Natural killer cell (primary cell): ENCODE measurements at regions of chr2 and their contacts with region 1.

Region 1: DNA sequence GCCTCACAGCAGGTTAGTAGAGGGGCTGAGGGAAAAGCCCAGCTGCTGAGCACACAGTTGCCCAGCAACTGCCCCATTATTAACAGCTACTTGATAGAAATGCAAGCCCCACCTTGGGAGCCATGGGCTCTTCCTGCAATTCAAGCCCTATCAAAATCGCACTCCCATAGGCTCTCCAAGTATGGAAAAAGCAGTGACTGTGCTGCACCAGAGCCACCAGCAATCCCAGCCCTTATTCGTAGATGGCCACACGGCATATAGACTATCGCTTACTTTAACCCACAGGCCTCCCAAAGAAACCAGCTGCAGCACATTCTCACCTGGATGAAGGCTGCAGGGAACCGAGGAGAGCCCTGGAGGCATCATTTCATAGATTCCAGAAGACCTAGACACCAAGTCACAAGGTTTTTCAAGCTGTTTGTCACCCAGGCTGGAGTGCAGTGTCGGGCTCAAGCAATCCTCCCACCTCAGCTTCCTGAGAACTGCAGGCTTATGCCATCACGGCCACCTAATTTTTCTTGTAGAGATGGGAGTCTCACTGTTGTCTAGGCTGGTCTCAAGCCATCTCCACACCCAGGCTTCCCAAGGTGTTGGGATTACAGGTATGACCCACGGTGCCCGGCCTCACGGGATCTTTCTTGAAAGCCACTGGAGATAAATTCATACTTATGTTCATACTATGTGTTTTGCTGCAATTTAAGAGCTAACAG is 11.3 kb downstream of the NCL start:
- DNase-seq: no peak
- ATAC-seq: no peak
- H3K4me3 ChIP-seq: no peak overlapping the region
- H3K4me3 Mint-ChIP-seq: peak overlapping the region; percentile 37
- H3K27ac ChIP-seq: no peak overlapping the region
- H3K27ac Mint-ChIP-seq: peak overlapping the region; percentile 78 to 81
- H3K4me1 ChIP-seq: peaks cover 6% of the 10 kb centered on the region
- H3K4me1 Mint-ChIP-seq: peaks cover 24 to 25% of the 10 kb centered on the region in 2 donors
- H3K27me3 ChIP-seq: no peaks in the 10 kb centered on the region
- H3K27me3 Mint-ChIP-seq: no peaks in the 10 kb centered on the region
- CTCF ChIP-seq: no peak

Region 2: GRCh38 chr2:231104115-231104713 is 348.7 kb before region 1 on chr2:
- intact Hi-C with region 1: loop called (anchors 1 kb)
- DNase-seq: peak; percentile 54 to 74
- ATAC-seq: peak; percentile 83 to 95 (median 94)
- H3K4me3 ChIP-seq: no peak overlapping the region
- H3K4me3 Mint-ChIP-seq: no peak overlapping the region
- H3K27ac ChIP-seq: no peak overlapping the region
- H3K27ac Mint-ChIP-seq: peak overlapping the region in 1 of 2 donors; percentile 59
- H3K4me1 ChIP-seq: no peaks in the 10 kb centered on the region
- H3K4me1 Mint-ChIP-seq: no peaks in the 10 kb centered on the region
- H3K27me3 ChIP-seq: no peaks in the 10 kb centered on the region
- H3K27me3 Mint-ChIP-seq: no peaks in the 10 kb centered on the region
- CTCF ChIP-seq: peak; percentile 71

Region 3: GRCh38 chr2:231227309-231228162 is 225.4 kb before region 1 on chr2:
- intact Hi-C with region 1: loop called (anchors 1 kb)
- DNase-seq: peak; percentile 25 to 72
- ATAC-seq: peak; percentile 93 to 100 (median 99)
- H3K4me3 ChIP-seq: no peak overlapping the region
- H3K4me3 Mint-ChIP-seq: no peak overlapping the region
- H3K27ac ChIP-seq: no peak overlapping the region
- H3K27ac Mint-ChIP-seq: no peak overlapping the region
- H3K4me1 ChIP-seq: no peaks in the 10 kb centered on the region
- H3K4me1 Mint-ChIP-seq: no peaks in the 10 kb centered on the region
- H3K27me3 ChIP-seq: no peaks in the 10 kb centered on the region
- H3K27me3 Mint-ChIP-seq: no peaks in the 10 kb centered on the region
- CTCF ChIP-seq: peak; percentile 80

Region 4: DNA sequence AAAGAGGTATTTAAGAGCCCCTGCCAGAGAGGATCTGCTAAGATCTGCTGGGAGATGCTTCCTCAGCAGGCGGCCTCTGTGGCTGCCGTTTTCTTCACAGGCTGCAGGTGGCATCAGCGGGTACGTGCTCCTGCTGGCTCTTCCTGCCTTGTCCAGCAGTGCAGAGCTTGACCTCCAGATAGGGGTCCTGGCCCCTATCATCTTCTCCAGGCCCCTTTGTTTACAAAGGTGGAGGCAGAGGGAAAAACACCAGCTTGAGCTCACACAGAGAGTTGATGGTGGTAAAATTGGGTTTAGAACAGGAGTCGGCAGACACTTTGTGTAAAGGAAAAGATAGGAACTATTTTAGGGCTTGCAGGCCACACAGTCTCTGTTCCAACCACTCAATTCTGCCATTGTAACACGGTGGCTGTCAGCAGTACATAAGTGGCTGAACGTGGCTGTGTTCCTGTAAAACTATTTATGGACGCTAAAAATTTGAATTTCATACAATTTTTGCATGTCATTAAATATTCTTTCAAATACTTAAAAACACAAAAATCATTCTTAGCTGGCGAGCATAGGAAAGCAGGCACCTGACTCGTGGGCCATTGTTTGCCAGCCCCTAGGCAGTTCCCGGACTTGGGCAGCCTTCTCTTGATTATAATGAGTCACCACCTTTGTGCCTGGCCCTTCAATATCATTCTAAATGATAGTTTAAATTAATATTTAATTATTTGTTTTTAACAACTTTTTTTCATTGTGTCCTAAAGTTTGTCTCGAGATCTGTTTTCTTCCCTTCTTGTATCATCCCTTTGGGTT is 155.6 kb before region 1 on chr2:
- intact Hi-C with region 1: loop called (anchors 2 kb)
- DNase-seq: peak; percentile 42
- ATAC-seq: peak in 2 of 3 donors; percentile 77 to 78
- H3K4me3 ChIP-seq: no peak overlapping the region
- H3K4me3 Mint-ChIP-seq: no peak overlapping the region
- H3K27ac ChIP-seq: no peak overlapping the region
- H3K27ac Mint-ChIP-seq: peak overlapping the region; percentile 4 to 49
- H3K4me1 ChIP-seq: peaks cover 22% of the 10 kb centered on the region
- H3K4me1 Mint-ChIP-seq: peaks cover 38 to 40% of the 10 kb centered on the region in 2 donors
- H3K27me3 ChIP-seq: no peaks in the 10 kb centered on the region
- H3K27me3 Mint-ChIP-seq: no peaks in the 10 kb centered on the region
- CTCF ChIP-seq: peak; percentile 77

Region 5: DNA sequence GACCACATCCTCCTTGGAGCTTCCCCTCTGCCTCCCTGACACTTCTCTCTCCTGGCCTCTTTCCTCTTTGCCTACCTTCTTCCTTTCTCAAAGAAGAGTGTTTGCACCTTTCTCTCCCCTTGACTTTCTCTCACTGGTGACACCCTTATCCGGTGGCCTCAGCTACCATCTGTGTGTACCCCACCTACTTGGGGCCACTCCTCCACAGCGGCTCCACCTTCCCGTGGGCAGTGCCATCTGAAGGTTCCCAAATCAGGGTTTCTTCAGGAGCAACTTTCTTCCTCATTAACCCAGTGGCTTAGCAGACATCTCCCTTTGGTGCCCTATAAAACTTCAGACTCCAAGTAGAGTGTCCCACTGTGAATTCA is 16.6 kb after region 1 on chr2:
- intact Hi-C with region 1: no loop called
- DNase-seq: no peak
- ATAC-seq: no peak
- H3K4me3 ChIP-seq: no peak overlapping the region
- H3K4me3 Mint-ChIP-seq: peak overlapping the region; percentile 13
- H3K27ac ChIP-seq: no peak overlapping the region
- H3K27ac Mint-ChIP-seq: peak overlapping the region in 1 of 2 donors; percentile 63
- H3K4me1 ChIP-seq: peaks cover 19% of the 10 kb centered on the region
- H3K4me1 Mint-ChIP-seq: peaks cover 17 to 20% of the 10 kb centered on the region in 2 donors
- H3K27me3 ChIP-seq: no peaks in the 10 kb centered on the region
- H3K27me3 Mint-ChIP-seq: peaks cover 0 to 10% of the 10 kb centered on the region in 2 donors
- CTCF ChIP-seq: no peak